ENCODE measurements at regions of chr6 and their contacts with region 1.

Region 1: DNA sequence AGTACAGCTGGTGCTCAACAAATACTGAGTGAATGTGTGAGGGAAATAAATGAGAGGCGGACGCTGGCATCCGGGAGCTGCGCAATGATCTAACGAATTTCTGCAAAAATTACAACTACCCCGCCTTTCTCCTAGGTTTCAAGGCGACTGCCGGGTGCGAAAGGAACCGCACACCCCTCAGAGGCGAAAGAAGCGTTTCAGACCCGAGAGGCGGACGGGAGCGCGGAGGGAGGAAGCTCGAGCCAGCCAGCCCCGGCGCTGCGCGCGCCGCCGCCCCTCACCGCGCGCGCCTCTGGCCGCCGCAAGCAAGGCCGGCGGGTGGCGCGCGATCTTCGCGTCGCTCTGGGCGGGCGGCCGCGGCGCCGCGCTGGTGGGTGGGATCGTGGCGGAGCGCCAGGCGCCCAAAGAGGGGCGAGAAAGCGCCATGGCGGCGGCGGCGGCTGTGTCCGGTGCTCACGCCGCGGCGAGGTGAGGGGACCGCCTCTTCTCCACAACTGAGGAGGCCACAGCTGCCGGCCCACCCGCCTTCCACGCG is at the start of gene BLTP3A:
- H3K4me3 ChIP-seq: peak within 1 kb of the TSS; percentile 98
- H3K27ac ChIP-seq: peak within 1 kb of the TSS; percentile 96
- H3K4me1 ChIP-seq: peaks cover 8% of the 10 kb centered on the region; the same call in 1 of the 2 replicates
- CTCF ChIP-seq: no peak; the same call in 1 of the 2 replicates

Region 2: GRCh38 chr6:34696739-34697543 is 94.8 kb before region 1 on chr6 and contains the start of gene ILRUN:
- CTCF ChIA-PET with region 1: interaction called, 3 read pairs
- POLR2A ChIA-PET with region 1: interaction called, 17 read pairs
- H3K4me3 ChIP-seq: peak within 1 kb of the TSS; percentile 96
- H3K27ac ChIP-seq: peak within 1 kb of the TSS; percentile 81
- H3K4me1 ChIP-seq: no peaks in the 10 kb centered on the region
- CTCF ChIP-seq: no peak

Region 3: GRCh38 chr6:34745277-34746103 is 46.3 kb before region 1 on chr6:
- CTCF ChIA-PET with region 1: no interaction called
- POLR2A ChIA-PET with region 1: no interaction called
- H3K4me3 ChIP-seq: no peak overlapping the region
- H3K27ac ChIP-seq: no peak overlapping the region
- H3K4me1 ChIP-seq: 0 out of 2 replicates have a peak, but pooled peaks cover 3% of the 10 kb centered on the region
- CTCF ChIP-seq: no peak

Region 4: DNA sequence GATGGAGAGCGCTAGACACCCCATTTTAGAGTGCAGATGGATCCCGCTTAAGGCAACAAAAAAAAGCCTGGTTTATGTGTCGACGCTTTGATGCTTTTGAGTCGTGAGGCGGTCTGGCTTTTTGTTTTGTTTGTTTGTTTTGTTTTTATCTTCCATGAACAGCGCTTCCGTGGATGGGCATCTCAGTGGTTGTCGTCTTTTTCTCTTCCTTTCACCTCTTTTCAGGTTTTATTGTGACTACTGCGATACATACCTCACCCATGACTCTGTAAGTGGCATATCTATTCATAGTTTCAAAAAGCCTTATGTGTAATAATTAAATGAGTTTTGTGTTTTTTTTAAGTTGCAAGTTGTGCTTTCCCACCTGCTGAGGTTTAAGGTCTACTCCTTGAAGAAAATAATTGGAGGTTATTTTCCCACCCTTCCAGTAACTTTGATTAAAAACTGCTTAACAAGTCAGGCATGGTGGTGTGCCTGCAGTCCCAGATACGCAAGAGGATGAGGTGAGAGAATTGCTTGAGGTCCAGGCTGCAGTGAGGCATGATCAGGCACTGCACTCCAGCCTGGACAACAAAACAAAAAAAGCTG is 34.0 kb before region 1 on chr6:
- CTCF ChIA-PET with region 1: interaction called, 3 read pairs
- POLR2A ChIA-PET with region 1: interaction called, 14 read pairs
- H3K4me3 ChIP-seq: peak overlapping the region; percentile 97
- H3K27ac ChIP-seq: peak overlapping the region; percentile 72
- H3K4me1 ChIP-seq: no peaks in the 10 kb centered on the region
- CTCF ChIP-seq: no peak

Region 5: GRCh38 chr6:34774967-34775366 is 16.8 kb before region 1 on chr6:
- CTCF ChIA-PET with region 1: interaction called, 4 read pairs
- POLR2A ChIA-PET with region 1: interaction called, 10 read pairs
- H3K4me3 ChIP-seq: no peak overlapping the region
- H3K27ac ChIP-seq: no peak overlapping the region
- H3K4me1 ChIP-seq: no peaks in the 10 kb centered on the region
- CTCF ChIP-seq: no peak

Region 6: DNA sequence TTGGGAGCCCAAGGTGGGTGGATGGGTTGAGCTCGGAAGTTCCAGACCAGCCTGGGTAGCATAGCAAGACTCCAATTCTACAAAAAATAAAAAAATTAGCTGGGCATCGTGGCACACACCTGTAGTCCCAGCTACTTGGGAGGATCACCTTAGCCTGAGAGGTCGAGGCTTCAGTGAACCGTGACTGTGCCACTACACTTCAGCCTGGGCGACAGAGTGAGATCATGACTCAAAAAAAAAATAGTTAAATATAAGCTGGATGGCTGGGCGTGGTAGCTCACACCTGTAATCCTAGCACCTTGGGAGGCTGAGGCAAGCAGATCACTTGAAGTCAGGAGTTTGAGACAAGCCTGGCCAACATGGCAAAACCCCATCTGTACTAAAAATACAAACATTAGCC is 13.3 kb after region 1 on chr6:
- CTCF ChIA-PET with region 1: interaction called, 6 read pairs
- POLR2A ChIA-PET with region 1: interaction called, 16 read pairs
- H3K4me3 ChIP-seq: no peak overlapping the region
- H3K27ac ChIP-seq: no peak overlapping the region
- H3K4me1 ChIP-seq: peaks cover 3% of the 10 kb centered on the region
- CTCF ChIP-seq: no peak

Region 7: DNA sequence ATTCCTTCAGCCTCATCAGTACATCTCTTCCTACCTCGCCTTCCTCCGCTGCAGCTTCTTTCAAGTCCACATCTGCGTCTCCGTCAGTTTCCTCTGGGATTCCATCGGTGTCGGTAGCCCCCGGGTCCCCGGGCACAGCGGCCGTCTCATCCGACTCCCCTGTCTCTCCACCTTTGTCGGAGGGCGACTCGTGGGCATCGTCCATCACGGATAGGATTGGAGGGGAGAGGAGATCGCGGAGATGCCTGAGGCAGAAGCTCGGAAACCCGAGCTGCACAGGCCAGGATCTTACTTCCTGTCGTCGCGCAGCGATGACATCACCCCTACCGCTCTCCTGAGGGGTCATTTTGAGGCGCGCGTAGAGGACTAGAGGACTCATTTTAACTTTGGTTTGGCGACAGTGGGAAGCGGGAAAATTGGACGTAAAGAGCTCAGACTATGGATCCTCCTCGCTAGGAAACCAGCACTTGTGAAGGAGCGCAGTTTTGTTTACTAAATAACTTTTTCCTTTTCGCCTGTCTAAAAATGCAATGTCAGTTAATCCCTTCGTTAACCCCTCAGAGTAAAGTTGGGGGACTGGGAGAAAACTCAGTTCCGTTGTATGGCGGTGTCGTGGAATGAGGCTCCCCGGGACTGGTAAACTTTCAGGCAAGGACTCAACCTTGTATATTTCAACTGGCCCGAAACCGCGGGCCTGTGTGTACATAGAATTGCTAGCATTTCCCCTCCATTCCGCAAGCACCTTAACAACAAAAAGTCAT is 96.2 kb after region 1 on chr6 and contains the start of gene TAF11:
- CTCF ChIA-PET with region 1: interaction called, 3 read pairs
- POLR2A ChIA-PET with region 1: interaction called, 25 read pairs
- H3K4me3 ChIP-seq: peak within 1 kb of the TSS; percentile 73
- H3K27ac ChIP-seq: peak within 1 kb of the TSS; percentile 78
- H3K4me1 ChIP-seq: peaks cover 2% of the 10 kb centered on the region; the same call in 1 of the 2 replicates
- CTCF ChIP-seq: no peak